Activated CD4-positive, alpha-beta T cell treated with anti-CD3 and anti-CD28 coated beads for 36 hours (primary cell): ENCODE measurements at regions of chr4 and their contacts with region 1.

Region 1: DNA sequence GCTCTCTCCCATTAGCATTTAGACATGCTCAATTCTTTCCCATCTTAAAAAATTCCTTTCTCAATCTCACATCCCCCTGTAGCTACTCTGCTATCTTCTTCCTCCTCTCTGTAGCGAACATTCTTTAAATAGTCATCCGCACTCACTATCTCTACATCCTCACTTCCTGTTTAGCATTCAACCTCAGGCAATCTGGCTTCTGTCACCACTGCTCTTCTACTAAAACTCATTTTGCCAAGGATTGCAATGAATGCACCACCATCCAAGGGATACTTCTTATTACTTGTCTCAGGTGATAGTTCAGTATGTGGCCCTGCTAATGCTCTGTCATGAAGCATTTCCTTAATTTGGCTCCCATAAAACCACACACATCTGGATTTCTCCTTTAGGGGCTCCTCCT is 10.9 kb upstream of the TET2 start:
- DNase-seq: no peak
- ATAC-seq: no peak
- H3K4me3 Mint-ChIP-seq: no peak overlapping the region
- H3K27ac Mint-ChIP-seq: no peak overlapping the region
- H3K4me1 Mint-ChIP-seq: peaks cover 4% of the 10 kb centered on the region
- H3K27me3 Mint-ChIP-seq: no peaks in the 10 kb centered on the region

Region 2: GRCh38 chr4:104966349-104967033 is 169.3 kb before region 1 on chr4:
- CTCF ChIA-PET with region 1: interaction called, 4 read pairs
- POLR2A ChIA-PET with region 1: no interaction called
- intact Hi-C with region 1: loop called (anchors 2 to 5 kb)
- DNase-seq: peak; percentile 61
- ATAC-seq: peak; percentile 97
- H3K4me3 Mint-ChIP-seq: peak overlapping the region; percentile 43
- H3K27ac Mint-ChIP-seq: peak overlapping the region; percentile 98
- H3K4me1 Mint-ChIP-seq: peaks cover 18% of the 10 kb centered on the region
- H3K27me3 Mint-ChIP-seq: peaks cover 5% of the 10 kb centered on the region

Region 3: DNA sequence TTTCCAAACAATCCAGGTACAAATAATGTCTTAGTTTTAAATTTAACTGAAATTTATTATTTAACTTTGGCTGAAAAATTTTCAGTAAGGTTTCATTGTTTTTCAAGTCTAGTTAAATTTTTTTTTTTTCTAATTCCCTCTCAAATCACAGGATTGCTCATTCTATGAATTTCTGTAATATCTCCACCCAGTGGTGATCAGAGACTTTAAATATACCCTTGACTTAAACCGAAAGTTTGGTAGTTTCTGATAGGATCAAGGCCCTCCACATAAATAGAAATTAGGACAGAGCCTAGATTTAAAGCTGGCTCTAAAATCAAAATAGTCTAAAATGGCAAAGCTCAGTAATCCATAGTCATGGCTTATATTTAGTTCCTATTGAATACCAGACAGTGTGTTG is 1004.8 kb after region 1 on chr4:
- CTCF ChIA-PET with region 1: no interaction called
- POLR2A ChIA-PET with region 1: no interaction called
- intact Hi-C with region 1: no loop called
- DNase-seq: no peak
- ATAC-seq: no peak
- H3K4me3 Mint-ChIP-seq: no peak overlapping the region
- H3K27ac Mint-ChIP-seq: no peak overlapping the region
- H3K4me1 Mint-ChIP-seq: no peaks in the 10 kb centered on the region
- H3K27me3 Mint-ChIP-seq: no peaks in the 10 kb centered on the region